Activated naive CD4-positive, alpha-beta T cell treated with anti-CD3 and anti-CD28 coated beads for 36 hours (primary cell): ENCODE measurements at regions of chr15 and their contacts with region 1.

Region 1: GRCh38 chr15:92924216-92924615 is 24.1 kb downstream of the CHD2 start:
- DNase-seq: no peak
- H3K4me3 Mint-ChIP-seq: no peak overlapping the region
- H3K27ac Mint-ChIP-seq: peak overlapping the region; percentile 72
- H3K4me1 Mint-ChIP-seq: peaks cover 90% of the 10 kb centered on the region
- H3K27me3 Mint-ChIP-seq: no peaks in the 10 kb centered on the region

Region 2: DNA sequence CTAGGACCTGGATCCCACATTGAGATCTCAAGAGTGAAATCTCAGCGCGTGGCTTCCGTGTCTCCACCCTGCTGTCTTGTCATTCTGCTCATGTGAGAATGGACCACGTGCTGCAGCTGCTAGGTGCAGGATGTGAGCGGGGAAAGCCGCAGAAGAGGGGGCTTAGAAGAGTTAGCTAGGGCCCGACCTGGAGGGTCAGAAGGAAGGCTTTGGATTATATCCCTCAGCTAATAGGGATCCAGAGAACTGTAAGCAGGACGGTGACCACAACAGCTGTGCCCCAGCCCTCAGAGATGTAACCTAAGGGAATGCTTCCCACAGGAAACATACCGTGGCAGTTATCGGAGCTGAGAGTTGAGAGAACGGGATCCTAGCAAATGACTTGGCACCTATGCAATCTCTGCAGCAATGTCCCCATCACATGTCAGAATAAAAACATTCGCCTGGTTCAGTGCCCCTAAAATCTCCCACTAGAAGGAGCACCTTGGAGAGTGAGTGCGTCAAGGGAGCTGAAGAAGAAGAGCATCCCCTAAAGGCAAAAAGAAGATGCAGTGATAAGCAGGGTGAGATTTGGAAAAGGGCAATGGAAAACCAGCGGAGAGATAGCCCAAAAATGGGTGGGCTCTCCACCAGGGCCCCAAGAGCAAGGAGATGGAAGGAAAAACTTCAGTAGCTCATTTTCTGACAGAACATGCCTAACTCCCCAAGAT is 607.5 kb before region 1 on chr15:
- CTCF ChIA-PET with region 1: no interaction called
- intact Hi-C with region 1: loop called (anchors 5 kb)
- DNase-seq: no peak
- H3K4me3 Mint-ChIP-seq: no peak overlapping the region
- H3K27ac Mint-ChIP-seq: no peak overlapping the region
- H3K4me1 Mint-ChIP-seq: no peaks in the 10 kb centered on the region
- H3K27me3 Mint-ChIP-seq: peaks cover 10% of the 10 kb centered on the region